Lower leg skin (tissue), 4 donors: ENCODE measurements at regions of chr18 and their contacts with region 1.

Region 1: GRCh38 chr18:12934454-12935071 is 13.2 kb upstream of the SEH1L start:
- DNase-seq: peak; percentile 65 to 95
- H3K4me3 ChIP-seq: no peak overlapping the region
- CTCF ChIP-seq: peak in 1 of 3 donors; percentile 88
- POLR2A ChIP-seq: no peak

Region 2: GRCh38 chr18:11840493-11840892 is 1094.1 kb before region 1 on chr18:
- intact Hi-C with region 1: no loop called
- DNase-seq: no peak
- H3K4me3 ChIP-seq: no peak overlapping the region
- CTCF ChIP-seq: no peak
- POLR2A ChIP-seq: no peak

Region 3: GRCh38 chr18:12726774-12727550 is 207.6 kb before region 1 on chr18:
- intact Hi-C with region 1: loop called (anchors 5 kb)
- DNase-seq: peak; percentile 61 to 65
- H3K4me3 ChIP-seq: no peak overlapping the region
- CTCF ChIP-seq: peak in 1 of 3 donors; percentile 67
- POLR2A ChIP-seq: no peak